ENCODE measurements at regions of chr15 and their contacts with region 1.

Region 1: GRCh38 chr15:50908210-50909009 is at the start of gene AP4E1:
- DNase-seq: peak; percentile 83 to 91
- H3K4me3 ChIP-seq: peak within 1 kb of the TSS; percentile 69 to 96 (median 84)
- H3K27ac ChIP-seq: peak within 1 kb of the TSS; percentile 95 to 98
- H3K4me1 ChIP-seq: peaks cover 0 to 6% of the 10 kb centered on the region in 2 donors
- H3K27me3 ChIP-seq: no peaks in the 10 kb centered on the region
- CTCF ChIP-seq: peak; percentile 92 to 98 (median 96)
- POLR2A ChIP-seq: no peak
- total RNA-seq, gene AP4E1: 5.8 to 12.8 (median 12.7) TPM

Region 2: DNA sequence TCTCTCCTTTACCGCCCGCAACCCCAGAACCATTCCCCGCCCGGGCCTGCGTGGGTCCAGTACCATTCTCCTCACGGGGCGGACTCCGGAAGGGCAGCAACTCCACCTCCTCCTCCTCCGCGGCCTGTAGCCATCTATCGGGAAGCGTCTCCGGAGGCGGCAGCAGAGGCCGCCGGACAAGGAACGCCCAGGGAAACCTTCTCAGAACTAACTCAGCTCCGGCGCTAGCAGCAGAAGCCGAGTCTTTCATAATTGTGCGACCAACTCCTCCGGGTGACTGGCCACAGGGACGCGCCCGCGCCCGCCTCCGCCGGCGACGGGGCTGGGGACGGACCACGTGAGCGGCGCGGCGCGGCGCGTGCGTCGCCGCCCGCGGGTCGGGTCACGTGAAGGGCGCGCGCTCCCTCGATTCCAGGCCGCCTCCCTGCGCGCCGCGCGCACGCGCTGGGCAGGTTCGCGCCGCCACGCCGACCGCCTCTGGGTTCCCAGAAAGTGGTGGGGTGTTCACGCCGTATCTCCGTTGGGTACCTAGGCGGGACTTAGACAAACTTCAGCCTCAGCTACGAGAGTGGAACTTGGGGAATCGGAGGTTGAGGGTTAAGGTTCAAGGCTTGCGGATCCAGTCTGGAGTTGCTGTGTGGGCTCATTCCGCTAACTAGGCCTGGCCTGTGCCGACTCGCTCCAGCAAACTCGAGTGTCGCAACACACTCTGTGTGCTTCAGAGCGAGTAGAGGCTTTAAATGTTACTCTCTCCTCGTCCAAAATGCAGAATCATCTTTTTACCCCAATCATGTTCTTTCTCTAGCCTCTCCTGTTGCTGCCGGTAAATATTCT is 221.7 kb before region 1 on chr15 and contains the start of gene TRPM7:
- intact Hi-C with region 1: loop called (anchors 10 kb)
- DNase-seq: peak; percentile 76 to 78
- H3K4me3 ChIP-seq: peak within 1 kb of the TSS; percentile 80 to 88 (median 81)
- H3K27ac ChIP-seq: peak within 1 kb of the TSS; percentile 96
- H3K4me1 ChIP-seq: peaks cover 0 to 3% of the 10 kb centered on the region in 2 donors
- H3K27me3 ChIP-seq: no peaks in the 10 kb centered on the region
- CTCF ChIP-seq: no peak
- POLR2A ChIP-seq: peak; percentile 49
- total RNA-seq, gene TRPM7: 44.0 to 94.4 (median 66.2) TPM

Region 3: GRCh38 chr15:50945725-50946124 is 37.3 kb after region 1 on chr15:
- intact Hi-C with region 1: no loop called
- DNase-seq: no peak
- H3K4me3 ChIP-seq: no peak overlapping the region
- H3K27ac ChIP-seq: no peak overlapping the region
- H3K4me1 ChIP-seq: no peaks in the 10 kb centered on the region
- H3K27me3 ChIP-seq: no peaks in the 10 kb centered on the region
- CTCF ChIP-seq: no peak
- POLR2A ChIP-seq: no peak

Measured in breast epithelium (tissue), 4 donors.